ENCODE measurements at regions of chr9 and their contacts with region 1.

Region 1: GRCh38 chr9:68704814-68705530 is at the start of gene PIP5K1B:
- DNase-seq: peak; percentile 79
- ATAC-seq: peak; percentile 92 to 96
- total RNA-seq, gene PIP5K1B: 47.0 to 50.1 TPM

Region 2: GRCh38 chr9:68779558-68780384 is 74.8 kb after region 1 on chr9:
- intact Hi-C with region 1: loop called in 1 of 2 experiments (anchors 5 kb)
- DNase-seq: peak; percentile 96
- ATAC-seq: peak; percentile 96

Region 3: GRCh38 chr9:68919661-68920060 is 214.7 kb after region 1 on chr9:
- intact Hi-C with region 1: loop called in 1 of 2 experiments (anchors 10 kb)
- DNase-seq: no peak
- ATAC-seq: no peak

Region 4: DNA sequence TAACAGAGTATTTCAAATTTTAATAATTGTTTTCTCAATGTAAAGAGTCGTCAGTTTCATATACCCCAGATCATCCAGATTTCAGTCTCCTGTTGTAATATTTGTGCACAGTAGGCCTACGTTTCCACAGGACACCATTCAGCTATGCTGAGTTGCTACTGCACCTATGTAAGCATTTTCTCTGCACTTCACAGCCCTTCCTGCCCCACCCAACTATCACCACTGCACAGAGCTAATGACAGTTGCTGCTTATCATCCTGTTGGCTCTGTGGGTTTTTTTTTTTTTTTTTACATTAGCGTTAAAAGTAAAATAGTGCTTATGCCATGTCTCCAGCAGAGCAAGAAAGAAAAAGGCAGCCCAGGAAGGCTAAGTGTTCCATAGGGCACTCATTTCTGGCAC is 314.8 kb after region 1 on chr9:
- intact Hi-C with region 1: loop called (anchors 5 to 10 kb)
- DNase-seq: no peak
- ATAC-seq: no peak